Heart right ventricle (tissue), 16 donors: ENCODE measurements at regions of chr14 and their contacts with region 1.

Region 1: GRCh38 chr14:89701211-89702043 is 253.1 kb downstream of the EFCAB11 start:
- DNase-seq: peak; percentile 92
- ATAC-seq: peak; percentile 92 to 98 (median 97)
- H3K4me3 ChIP-seq: peak overlapping the region; percentile 14 to 70 (median 64)
- H3K27ac ChIP-seq: peak overlapping the region; percentile 71 to 90 (median 86)
- H3K4me1 ChIP-seq: peaks cover 2 to 22% (median 17%) of the 10 kb centered on the region in 9 donors
- H3K27me3 ChIP-seq: no peaks in the 10 kb centered on the region
- CTCF ChIP-seq: no peak

Region 2: DNA sequence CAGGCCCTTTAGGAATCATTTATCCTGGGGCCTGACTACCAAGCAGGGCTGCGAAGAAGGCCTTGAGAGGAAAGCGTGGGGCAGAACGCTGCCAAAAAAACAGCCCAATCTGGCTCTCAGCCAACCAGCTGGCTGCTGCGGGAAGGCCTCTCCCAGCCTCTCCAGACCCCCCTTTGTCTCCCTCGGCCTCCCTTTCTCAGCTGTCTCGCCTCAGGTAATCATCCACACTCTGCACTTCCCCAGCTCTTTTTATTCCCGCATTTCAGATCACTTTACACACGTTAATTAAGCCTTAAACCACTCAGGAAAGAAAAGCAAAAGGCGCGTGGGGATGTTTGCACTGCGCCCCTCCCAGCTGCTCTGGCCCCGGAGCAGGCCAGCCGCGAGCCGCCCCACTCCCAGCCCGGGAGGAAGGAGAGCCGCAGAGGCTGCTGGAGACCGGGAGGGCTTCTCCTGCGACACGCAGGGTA is 76.1 kb before region 1 on chr14:
- intact Hi-C with region 1: loop called in 2 of 10 experiments (anchors 5 to 10 kb)
- DNase-seq: peak; percentile 46 to 52
- ATAC-seq: peak; percentile 34 to 76 (median 44)
- H3K4me3 ChIP-seq: peak overlapping the region in 1 of 10 donors; percentile 11
- H3K27ac ChIP-seq: peak overlapping the region in 2 of 10 donors; percentile 11 to 17
- H3K4me1 ChIP-seq: peaks cover 4 to 21% (median 13%) of the 10 kb centered on the region in 9 donors
- H3K27me3 ChIP-seq: no peaks in the 10 kb centered on the region
- CTCF ChIP-seq: no peak